K562 (cell line): ENCODE measurements at regions of chr13 and their contacts with region 1.

Region 1: DNA sequence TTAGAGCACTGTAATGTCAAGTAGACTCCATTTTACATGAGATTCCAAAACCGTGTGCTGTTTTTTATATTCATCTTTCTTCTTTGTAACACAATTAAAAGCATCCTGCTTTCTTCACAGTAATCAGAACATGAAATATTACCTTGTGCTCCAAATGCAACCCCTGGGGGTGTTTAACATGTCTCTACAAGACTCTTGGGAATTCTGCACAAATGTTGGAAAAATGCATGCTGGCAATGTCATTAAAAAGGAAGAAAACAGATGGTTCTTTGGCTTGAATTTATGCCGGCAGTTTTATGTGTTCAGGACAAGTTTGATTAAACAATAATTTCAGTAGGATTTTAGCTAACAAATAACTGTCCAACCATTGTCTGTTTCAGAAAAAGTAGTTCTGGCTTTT is 159.1 kb downstream of the LIG4 start:
- DNase-seq: no peak
- ATAC-seq: no peak
- H3K4me3 ChIP-seq: no peak overlapping the region
- H3K27ac ChIP-seq: no peak overlapping the region
- H3K4me1 ChIP-seq: no peaks in the 10 kb centered on the region
- H3K27me3 ChIP-seq: no peaks in the 10 kb centered on the region
- CTCF ChIP-seq: no peak
- EP300 ChIP-seq: no peak
- POLR2A ChIP-seq: no peak
- RAD21 ChIP-seq: no peak

Region 2: GRCh38 chr13:106587787-106588186 is 1468.5 kb before region 1 on chr13:
- CTCF ChIA-PET with region 1: no interaction called
- POLR2A ChIA-PET with region 1: no interaction called
- in situ Hi-C with region 1: no loop called
- intact Hi-C with region 1: no loop called
- DNase-seq: no peak
- ATAC-seq: no peak
- H3K4me3 ChIP-seq: no peak overlapping the region
- H3K27ac ChIP-seq: no peak overlapping the region
- H3K4me1 ChIP-seq: no peaks in the 10 kb centered on the region
- H3K27me3 ChIP-seq: no peaks in the 10 kb centered on the region
- CTCF ChIP-seq: no peak
- EP300 ChIP-seq: no peak
- POLR2A ChIP-seq: no peak
- RAD21 ChIP-seq: no peak

Region 3: DNA sequence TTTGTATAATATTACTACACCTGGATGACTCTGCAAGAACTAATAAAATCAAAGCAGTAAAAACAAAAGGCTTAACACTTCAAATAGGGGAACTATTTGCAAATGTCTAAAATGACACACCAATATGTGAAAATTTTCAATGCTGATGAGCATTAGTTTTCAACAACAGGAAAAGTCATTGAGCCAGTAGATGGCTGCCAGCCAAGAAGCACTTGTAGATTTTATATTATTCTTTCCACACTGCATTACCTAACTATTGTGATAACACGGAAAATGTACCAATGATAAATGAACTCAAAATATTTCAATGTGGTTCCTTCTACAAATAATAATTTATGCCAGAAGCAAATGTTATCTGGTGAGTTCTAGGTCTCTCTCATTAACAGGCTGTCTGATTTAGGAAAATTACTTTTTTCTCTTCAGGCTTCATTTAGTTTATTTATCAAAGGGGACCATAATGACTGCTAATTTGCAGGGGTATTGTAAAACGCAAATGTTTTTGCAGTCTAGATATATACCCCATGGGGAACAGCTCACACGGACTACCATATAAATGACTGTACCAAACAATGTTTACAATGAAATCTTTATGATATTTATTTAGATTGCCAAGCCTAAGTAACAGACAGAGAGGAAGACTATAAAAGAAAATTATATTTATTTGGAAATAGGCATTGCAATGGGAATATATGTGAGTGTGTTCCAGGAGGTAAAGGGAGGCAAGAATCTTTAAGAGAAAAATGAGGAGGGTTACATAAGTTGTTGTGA is 248.8 kb before region 1 on chr13:
- CTCF ChIA-PET with region 1: no interaction called
- POLR2A ChIA-PET with region 1: no interaction called
- in situ Hi-C with region 1: loop called (anchors 25 kb)
- intact Hi-C with region 1: no loop called
- DNase-seq: no peak
- ATAC-seq: no peak
- H3K4me3 ChIP-seq: no peak overlapping the region
- H3K27ac ChIP-seq: no peak overlapping the region
- H3K4me1 ChIP-seq: no peaks in the 10 kb centered on the region
- H3K27me3 ChIP-seq: no peaks in the 10 kb centered on the region
- CTCF ChIP-seq: no peak
- EP300 ChIP-seq: no peak
- POLR2A ChIP-seq: no peak
- RAD21 ChIP-seq: no peak